PC-9 (cell line): ENCODE measurements at regions of chr9 and their contacts with region 1.

Region 1: DNA sequence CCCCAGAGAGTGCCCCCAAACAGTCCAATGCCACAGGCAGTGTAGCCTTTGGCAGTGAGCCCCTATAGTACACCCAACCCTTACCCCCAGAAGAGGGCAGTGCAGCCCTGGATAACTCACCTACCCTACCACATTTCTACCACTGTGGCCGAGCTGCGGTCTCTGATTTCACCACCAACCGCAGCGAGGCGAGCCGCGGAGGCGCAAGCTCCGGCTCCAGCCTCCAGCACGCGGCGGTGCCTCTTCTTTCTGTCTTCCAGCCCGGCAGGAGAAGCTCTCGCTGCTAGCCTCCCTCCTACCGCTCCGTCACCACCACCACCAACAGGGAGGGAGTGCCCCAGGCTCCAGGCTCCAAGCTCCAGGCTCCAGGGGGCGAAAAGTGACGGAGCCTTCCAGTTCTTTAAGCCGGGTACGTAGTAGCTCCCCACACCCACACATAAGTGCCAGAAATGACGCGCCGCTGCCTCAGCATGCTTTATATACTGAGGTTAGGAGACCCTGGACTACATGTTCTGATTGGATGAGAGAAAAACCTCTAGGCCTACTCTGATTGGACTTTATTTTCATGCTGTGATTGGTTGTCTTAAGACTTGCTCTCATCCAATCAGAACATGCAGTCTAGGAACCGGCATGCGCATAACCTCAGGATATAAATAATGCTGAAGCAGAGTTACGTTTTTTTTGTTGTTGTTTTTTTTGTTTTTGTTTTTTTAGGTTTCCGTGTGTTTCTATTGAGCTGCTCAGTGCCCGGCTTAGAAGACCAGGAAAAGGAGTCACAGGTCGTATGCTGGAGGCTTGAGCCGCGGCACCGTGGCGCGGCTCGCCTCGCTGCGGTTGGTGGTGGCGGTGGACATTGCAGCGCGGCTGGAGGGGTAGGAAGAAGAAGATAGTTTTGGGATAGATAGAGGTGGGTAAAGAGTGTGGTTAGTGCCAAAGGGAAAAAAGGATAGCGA is at the start of gene PCAT7:
- DNase-seq: peak; percentile 78 to 87
- H3K4me3 ChIP-seq: peak within 1 kb of the TSS; percentile 67
- H3K27ac ChIP-seq: peak within 1 kb of the TSS; percentile 82
- H3K4me1 ChIP-seq: peaks cover 5% of the 10 kb centered on the region
- H3K27me3 ChIP-seq: no peaks in the 10 kb centered on the region
- CTCF ChIP-seq: peak; percentile 82
- total RNA-seq, gene PCAT7: 3.8 and 3.9 TPM in 2 replicates

Region 2: DNA sequence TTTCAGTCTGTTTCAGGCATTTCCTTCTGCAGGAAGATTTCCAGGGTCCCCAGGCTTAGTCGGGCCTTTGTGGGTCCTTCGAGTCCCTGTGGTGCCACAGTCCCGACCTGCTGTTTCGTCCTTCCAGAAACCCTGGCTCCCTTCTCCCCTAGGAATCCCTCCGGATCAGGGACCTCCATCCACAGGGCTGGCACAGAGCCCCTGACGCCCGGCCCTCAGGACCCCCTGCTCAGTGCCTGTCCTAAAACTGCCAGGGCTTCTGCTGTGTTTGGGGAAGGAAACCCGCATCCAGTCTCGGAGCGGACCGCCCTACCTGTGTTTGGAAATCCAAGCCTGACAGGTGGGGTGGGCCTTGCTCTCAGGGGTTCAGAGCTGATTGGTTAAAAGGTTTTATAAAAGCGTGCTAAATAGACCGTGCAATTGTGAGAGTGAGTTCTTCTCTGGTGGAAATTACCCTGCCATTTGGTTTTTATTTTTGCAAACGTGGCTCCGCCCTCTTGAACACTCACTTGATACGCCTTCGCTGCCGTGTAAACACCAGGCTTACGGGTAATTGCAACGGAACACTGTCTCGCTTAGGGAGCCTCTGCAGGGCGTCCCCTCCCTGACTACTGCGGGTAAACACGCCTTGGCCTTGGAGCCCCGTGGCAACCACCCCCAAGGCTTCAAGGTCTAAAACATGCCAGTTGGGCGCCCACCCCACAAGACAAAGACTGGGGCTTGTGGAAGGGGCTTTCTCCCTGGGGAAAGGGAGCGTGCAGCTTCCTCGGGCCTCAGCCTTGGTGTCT is 857.2 kb before region 1 on chr9:
- CTCF ChIA-PET with region 1: no interaction called
- POLR2A ChIA-PET with region 1: no interaction called
- intact Hi-C with region 1: no loop called
- DNase-seq: no peak
- H3K4me3 ChIP-seq: no peak overlapping the region
- H3K27ac ChIP-seq: no peak overlapping the region
- H3K4me1 ChIP-seq: no peaks in the 10 kb centered on the region
- H3K27me3 ChIP-seq: peaks cover 67% of the 10 kb centered on the region
- CTCF ChIP-seq: no peak

Region 3: GRCh38 chr9:94603259-94604160 is 48.8 kb after region 1 on chr9:
- CTCF ChIA-PET with region 1: interaction called, 5 read pairs
- POLR2A ChIA-PET with region 1: no interaction called
- intact Hi-C with region 1: loop called (anchors 1 kb)
- DNase-seq: peak; percentile 45 to 73
- H3K4me3 ChIP-seq: no peak overlapping the region
- H3K27ac ChIP-seq: no peak overlapping the region
- H3K4me1 ChIP-seq: no peaks in the 10 kb centered on the region
- H3K27me3 ChIP-seq: no peaks in the 10 kb centered on the region
- CTCF ChIP-seq: peak; percentile 68

Region 4: GRCh38 chr9:94642501-94642900 is 87.8 kb after region 1 on chr9:
- CTCF ChIA-PET with region 1: no interaction called
- POLR2A ChIA-PET with region 1: no interaction called
- intact Hi-C with region 1: no loop called
- DNase-seq: no peak
- H3K4me3 ChIP-seq: no peak overlapping the region
- H3K27ac ChIP-seq: no peak overlapping the region
- H3K4me1 ChIP-seq: peaks cover 55% of the 10 kb centered on the region
- H3K27me3 ChIP-seq: no peaks in the 10 kb centered on the region
- CTCF ChIP-seq: no peak

Region 5: GRCh38 chr9:94672811-94673487 is 118.2 kb after region 1 on chr9:
- CTCF ChIA-PET with region 1: interaction called, 4 read pairs
- POLR2A ChIA-PET with region 1: interaction called, 17 read pairs
- intact Hi-C with region 1: loop called (anchors 1 kb)
- DNase-seq: peak in 1 of 2 experiments; percentile 85
- H3K4me3 ChIP-seq: no peak overlapping the region; the same call in 1 of the 2 replicates
- H3K27ac ChIP-seq: peak overlapping the region; percentile 61
- H3K4me1 ChIP-seq: peaks cover 19% of the 10 kb centered on the region
- H3K27me3 ChIP-seq: no peaks in the 10 kb centered on the region
- CTCF ChIP-seq: no peak

Region 6: DNA sequence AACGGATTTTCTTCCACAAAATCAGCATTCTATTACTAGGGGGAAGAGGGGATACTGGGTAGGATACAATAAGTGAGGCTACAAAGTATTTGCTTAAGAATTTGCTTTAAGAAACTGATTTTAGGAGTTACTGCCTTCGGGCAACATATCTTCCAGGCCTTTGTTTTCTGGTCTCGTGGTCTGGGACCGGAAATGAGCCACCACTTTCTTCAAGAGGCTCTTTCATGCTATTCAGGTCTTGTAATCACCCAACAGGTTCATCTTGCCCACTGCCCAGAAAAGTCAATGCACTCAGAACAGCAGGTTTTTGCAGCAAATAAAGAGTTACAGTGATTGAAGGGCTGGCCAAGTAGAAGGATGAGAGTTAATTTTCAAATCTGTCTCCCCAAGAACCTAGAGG is 165.2 kb after region 1 on chr9:
- CTCF ChIA-PET with region 1: no interaction called
- POLR2A ChIA-PET with region 1: no interaction called
- intact Hi-C with region 1: loop called (anchors 2 kb)
- DNase-seq: peak; percentile 37 to 64
- H3K4me3 ChIP-seq: no peak overlapping the region
- H3K27ac ChIP-seq: peak overlapping the region; percentile 68
- H3K4me1 ChIP-seq: peaks cover 41% of the 10 kb centered on the region
- H3K27me3 ChIP-seq: no peaks in the 10 kb centered on the region
- CTCF ChIP-seq: no peak

Region 7: GRCh38 chr9:94882966-94883641 is 328.4 kb after region 1 on chr9:
- CTCF ChIA-PET with region 1: no interaction called
- POLR2A ChIA-PET with region 1: no interaction called
- intact Hi-C with region 1: no loop called
- DNase-seq: no peak
- H3K4me3 ChIP-seq: no peak overlapping the region
- H3K27ac ChIP-seq: no peak overlapping the region
- H3K4me1 ChIP-seq: peaks cover 16% of the 10 kb centered on the region
- H3K27me3 ChIP-seq: no peaks in the 10 kb centered on the region
- CTCF ChIP-seq: no peak

Region 8: DNA sequence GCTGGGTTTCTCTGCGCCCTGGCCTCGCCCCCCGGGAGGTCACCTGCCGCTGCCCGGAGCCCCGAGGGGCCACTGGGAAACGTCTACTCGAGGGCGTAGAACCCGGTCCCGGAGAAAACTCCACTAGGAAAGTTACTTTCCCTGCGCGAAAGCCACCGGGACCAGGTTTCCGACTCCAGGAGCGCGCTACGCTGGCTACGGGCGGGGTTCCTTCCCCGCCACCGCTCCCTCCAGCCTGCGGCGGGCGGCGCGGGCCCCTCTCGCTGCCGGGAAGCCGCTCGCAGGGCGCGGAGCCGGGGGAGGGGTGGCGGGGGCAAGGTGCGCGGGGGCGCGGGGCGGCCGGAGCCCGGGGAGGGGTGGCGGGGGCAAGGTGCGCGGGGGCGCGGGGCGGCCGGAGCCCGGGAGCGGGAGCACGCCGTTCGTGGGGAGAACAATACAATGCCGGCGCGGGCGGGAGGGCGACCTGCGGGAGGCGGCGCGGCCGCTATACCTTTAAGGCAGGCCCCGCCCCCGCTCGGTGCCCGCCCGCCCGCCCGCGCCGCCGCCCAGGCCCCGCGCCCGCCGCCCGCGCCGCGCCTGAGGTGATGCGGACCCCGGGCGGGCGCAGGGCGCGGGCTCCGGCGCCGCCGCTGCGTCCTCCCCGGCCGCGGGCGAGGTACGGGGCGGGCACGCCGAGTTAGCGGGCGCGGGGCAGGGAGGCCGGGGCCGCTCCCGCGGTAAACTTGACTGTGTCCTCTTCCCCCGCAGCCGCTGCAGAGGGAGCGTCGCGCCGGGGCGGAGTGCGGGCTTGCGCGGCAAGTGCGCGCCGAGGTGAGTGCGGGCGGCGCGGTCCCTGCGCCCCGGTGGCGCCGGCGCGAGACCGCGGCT is 449.9 kb after region 1 on chr9:
- CTCF ChIA-PET with region 1: no interaction called
- POLR2A ChIA-PET with region 1: no interaction called
- intact Hi-C with region 1: loop called (anchors 5 kb)
- DNase-seq: peak in 1 of 2 experiments; percentile 65
- H3K4me3 ChIP-seq: peak overlapping the region; percentile 91
- H3K27ac ChIP-seq: peak overlapping the region; percentile 90
- H3K4me1 ChIP-seq: peaks cover 46% of the 10 kb centered on the region
- H3K27me3 ChIP-seq: no peaks in the 10 kb centered on the region
- CTCF ChIP-seq: no peak

Region 9: GRCh38 chr9:95127249-95128176 is 572.8 kb after region 1 on chr9:
- CTCF ChIA-PET with region 1: interaction called, 5 read pairs
- POLR2A ChIA-PET with region 1: no interaction called
- intact Hi-C with region 1: loop called (anchors 1 kb)
- DNase-seq: peak; percentile 43 to 83
- H3K4me3 ChIP-seq: no peak overlapping the region
- H3K27ac ChIP-seq: no peak overlapping the region
- H3K4me1 ChIP-seq: no peaks in the 10 kb centered on the region
- H3K27me3 ChIP-seq: no peaks in the 10 kb centered on the region
- CTCF ChIP-seq: peak; percentile 89